Activated T-helper 1 cell treated with anti-CD3 and anti-CD28 coated beads, Interleukin-12 subunit alpha, Interleukin-12 subunit beta, Interleukin-2, Interleukin-4 antibody, amounts not matched to agents 30 ng/mL and 10 ng/mL and 1 ng/mL, durations not matched to agents 14 hours and 24 hours and 36 hours (primary cell): ENCODE measurements at regions of chr20 and their contacts with region 1.

Region 1: DNA sequence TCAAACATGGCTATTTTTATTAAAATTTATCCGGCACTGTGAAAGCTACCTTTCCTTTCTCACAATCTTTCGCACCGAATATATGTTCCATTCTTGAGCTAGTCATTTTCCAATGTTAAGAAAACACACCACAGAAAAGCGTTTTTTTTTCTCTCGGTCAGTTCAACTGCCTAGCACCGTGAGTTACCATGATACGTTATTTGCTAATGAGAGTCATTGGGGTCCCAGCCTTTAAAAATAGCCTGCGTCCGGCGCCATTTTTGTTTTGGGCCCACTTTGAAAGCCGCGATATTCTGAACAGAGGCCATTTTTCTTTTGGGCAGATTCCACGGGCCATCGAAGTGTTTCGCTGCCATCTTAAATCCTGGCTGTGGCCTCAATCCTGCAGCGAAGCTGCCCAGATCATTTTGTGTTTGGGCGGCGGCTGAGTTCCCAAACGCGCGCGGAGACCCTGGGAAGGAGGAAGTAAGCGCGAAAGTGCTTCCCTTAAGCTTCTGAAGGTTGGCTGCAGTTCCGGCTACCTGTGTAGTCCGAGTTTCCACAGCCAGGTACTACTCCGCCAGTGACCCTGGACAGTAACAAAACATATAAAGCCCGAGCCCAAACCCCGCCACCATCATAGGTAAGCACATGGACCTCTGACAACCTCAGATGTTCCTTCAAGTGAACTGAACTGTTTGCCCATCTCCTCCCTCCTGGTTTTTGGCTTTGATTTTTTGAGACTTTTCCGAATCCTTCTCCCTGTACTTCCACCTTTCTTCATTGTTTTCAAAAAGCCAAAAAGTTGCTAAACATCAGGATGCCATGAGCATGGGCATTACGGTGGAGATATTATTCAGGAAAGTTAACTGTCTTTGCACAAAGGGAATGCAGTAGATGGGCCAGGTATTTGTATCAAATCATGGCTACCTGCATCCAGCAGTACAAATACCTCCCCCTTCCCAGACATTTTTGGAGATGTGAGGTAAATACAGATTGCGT is at the start of gene SLX4IP:
- DNase-seq: peak; percentile 77
- H3K4me3 Mint-ChIP-seq: peak within 1 kb of the TSS; percentile 94
- H3K27ac Mint-ChIP-seq: peak within 1 kb of the TSS; percentile 97
- H3K4me1 Mint-ChIP-seq: peaks cover 28% of the 10 kb centered on the region
- H3K27me3 Mint-ChIP-seq: no peaks in the 10 kb centered on the region
- total RNA-seq, gene SLX4IP: 5.0 and 5.8 TPM in 2 replicates

Region 2: GRCh38 chr20:10419550-10420133 is 15.5 kb before region 1 on chr20:
- intact Hi-C with region 1: no loop called
- DNase-seq: no peak
- H3K4me3 Mint-ChIP-seq: no peak overlapping the region
- H3K27ac Mint-ChIP-seq: no peak overlapping the region
- H3K4me1 Mint-ChIP-seq: no peaks in the 10 kb centered on the region
- H3K27me3 Mint-ChIP-seq: no peaks in the 10 kb centered on the region

Region 3: DNA sequence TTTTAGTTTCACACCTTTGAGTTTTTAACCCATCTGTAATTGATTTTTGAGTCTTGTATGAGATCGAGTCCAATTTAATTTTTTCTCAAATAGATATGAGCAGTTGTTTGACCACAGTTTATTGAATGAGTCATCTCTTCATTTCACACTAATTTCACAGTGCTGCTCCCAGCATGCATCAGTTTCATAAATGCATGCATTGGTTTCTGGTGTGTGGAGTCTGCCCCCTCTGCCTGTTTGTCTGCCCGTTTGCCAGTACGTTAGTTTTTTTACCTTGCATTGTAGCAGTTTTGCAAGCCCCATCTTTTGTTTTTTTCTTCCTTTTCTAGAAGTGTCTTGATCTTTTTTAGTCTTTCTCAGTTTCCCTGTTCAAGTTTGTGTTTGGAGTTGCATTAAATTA is 11.9 kb after region 1 on chr20:
- intact Hi-C with region 1: loop called (anchors 1 kb)
- DNase-seq: peak; percentile 27
- H3K4me3 Mint-ChIP-seq: peak overlapping the region; percentile 55
- H3K27ac Mint-ChIP-seq: peak overlapping the region; percentile 70
- H3K4me1 Mint-ChIP-seq: peaks cover 21% of the 10 kb centered on the region
- H3K27me3 Mint-ChIP-seq: no peaks in the 10 kb centered on the region

Region 4: GRCh38 chr20:10511509-10512251 is 76.6 kb after region 1 on chr20:
- intact Hi-C with region 1: loop called (anchors 2 kb)
- DNase-seq: peak; percentile 70
- H3K4me3 Mint-ChIP-seq: peak overlapping the region; percentile 36
- H3K27ac Mint-ChIP-seq: peak overlapping the region; percentile 64
- H3K4me1 Mint-ChIP-seq: peaks cover 44% of the 10 kb centered on the region
- H3K27me3 Mint-ChIP-seq: no peaks in the 10 kb centered on the region

Region 5: GRCh38 chr20:10596726-10597125 is 161.6 kb after region 1 on chr20:
- intact Hi-C with region 1: loop called (anchors 2 kb)
- DNase-seq: no peak
- H3K4me3 Mint-ChIP-seq: no peak overlapping the region
- H3K27ac Mint-ChIP-seq: no peak overlapping the region
- H3K4me1 Mint-ChIP-seq: peaks cover 11% of the 10 kb centered on the region
- H3K27me3 Mint-ChIP-seq: peaks cover 2% of the 10 kb centered on the region

Region 6: GRCh38 chr20:11890331-11891080 is 1455.4 kb after region 1 on chr20:
- intact Hi-C with region 1: loop called (anchors 5 kb)
- DNase-seq: peak; percentile 55
- H3K4me3 Mint-ChIP-seq: peak overlapping the region; percentile 82
- H3K27ac Mint-ChIP-seq: peak overlapping the region; percentile 1
- H3K4me1 Mint-ChIP-seq: peaks cover 25% of the 10 kb centered on the region
- H3K27me3 Mint-ChIP-seq: peaks cover 19% of the 10 kb centered on the region